Heart left ventricle (tissue), 16 donors: ENCODE measurements at regions of chr16 and their contacts with region 1.

Region 1: GRCh38 chr16:89484923-89485679 is 5.3 kb downstream of the ANKRD11 start:
- DNase-seq: no peak
- ATAC-seq: no peak
- H3K4me3 ChIP-seq: no peak overlapping the region
- H3K27ac ChIP-seq: peak overlapping the region in 2 of 12 donors; percentile 5 to 47
- H3K4me1 ChIP-seq: peaks cover 2 to 89% (median 78%) of the 10 kb centered on the region in 12 donors
- H3K27me3 ChIP-seq: no peaks in the 10 kb centered on the region
- CTCF ChIP-seq: no peak
- POLR2A ChIP-seq: no peak

Region 2: GRCh38 chr16:89324056-89325010 is 160.8 kb before region 1 on chr16:
- intact Hi-C with region 1: no loop called
- DNase-seq: peak in 1 of 5 donors; percentile 26
- ATAC-seq: no peak
- H3K4me3 ChIP-seq: no peak overlapping the region
- H3K27ac ChIP-seq: peak overlapping the region in 6 of 12 donors; percentile 77 to 92 (median 87)
- H3K4me1 ChIP-seq: peaks cover 35 to 95% (median 77%) of the 10 kb centered on the region in 12 donors
- H3K27me3 ChIP-seq: no peaks in the 10 kb centered on the region
- CTCF ChIP-seq: no peak
- POLR2A ChIP-seq: no peak

Region 3: GRCh38 chr16:89453501-89454321 is 31.4 kb before region 1 on chr16:
- intact Hi-C with region 1: loop called in 3 of 10 experiments (anchors 5 kb)
- DNase-seq: peak in 3 of 5 donors; percentile 28 to 60 (median 46)
- ATAC-seq: peak; percentile 47 to 73 (median 56)
- H3K4me3 ChIP-seq: no peak overlapping the region
- H3K27ac ChIP-seq: peak overlapping the region in 4 of 12 donors; percentile 11 to 65 (median 13)
- H3K4me1 ChIP-seq: peaks cover 7 to 81% (median 52%) of the 10 kb centered on the region in 12 donors
- H3K27me3 ChIP-seq: no peaks in the 10 kb centered on the region
- CTCF ChIP-seq: peak in 8 of 12 donors; percentile 11 to 46 (median 31)
- POLR2A ChIP-seq: no peak